ENCODE measurements at regions of chr10 and their contacts with region 1.

Region 1: GRCh38 chr10:100185364-100186252 is at the start of gene ERLIN1:
- DNase-seq: peak; percentile 96
- H3K4me3 Mint-ChIP-seq: peak within 1 kb of the TSS; percentile 90
- H3K27ac Mint-ChIP-seq: peak within 1 kb of the TSS; percentile 92
- H3K4me1 Mint-ChIP-seq: peaks cover 55% of the 10 kb centered on the region
- H3K27me3 Mint-ChIP-seq: no peaks in the 10 kb centered on the region
- total RNA-seq, gene ERLIN1: 15.4 to 16.8 TPM

Region 2: GRCh38 chr10:100167553-100168312 is 17.9 kb before region 1 on chr10:
- CTCF ChIA-PET with region 1: no interaction called
- POLR2A ChIA-PET with region 1: interaction called, 5 read pairs
- intact Hi-C with region 1: loop called (anchors 2 kb)
- DNase-seq: no peak
- H3K4me3 Mint-ChIP-seq: peak overlapping the region; percentile 44
- H3K27ac Mint-ChIP-seq: peak overlapping the region; percentile 56
- H3K4me1 Mint-ChIP-seq: peaks cover 42% of the 10 kb centered on the region
- H3K27me3 Mint-ChIP-seq: no peaks in the 10 kb centered on the region

Region 3: GRCh38 chr10:100174699-100175677 is 10.6 kb before region 1 on chr10:
- CTCF ChIA-PET with region 1: no interaction called
- POLR2A ChIA-PET with region 1: interaction called, 20 read pairs
- intact Hi-C with region 1: loop called (anchors 1 kb)
- DNase-seq: peak; percentile 34
- H3K4me3 Mint-ChIP-seq: peak overlapping the region; percentile 26
- H3K27ac Mint-ChIP-seq: peak overlapping the region; percentile 57
- H3K4me1 Mint-ChIP-seq: peaks cover 41% of the 10 kb centered on the region
- H3K27me3 Mint-ChIP-seq: no peaks in the 10 kb centered on the region

Region 4: GRCh38 chr10:100229819-100230422 is 44.3 kb after region 1 on chr10:
- CTCF ChIA-PET with region 1: no interaction called
- POLR2A ChIA-PET with region 1: no interaction called
- intact Hi-C with region 1: loop called (anchors 1 kb)
- DNase-seq: no peak
- H3K4me3 Mint-ChIP-seq: peak overlapping the region; percentile 88
- H3K27ac Mint-ChIP-seq: peak overlapping the region; percentile 81
- H3K4me1 Mint-ChIP-seq: peaks cover 25% of the 10 kb centered on the region
- H3K27me3 Mint-ChIP-seq: no peaks in the 10 kb centered on the region

Region 5: DNA sequence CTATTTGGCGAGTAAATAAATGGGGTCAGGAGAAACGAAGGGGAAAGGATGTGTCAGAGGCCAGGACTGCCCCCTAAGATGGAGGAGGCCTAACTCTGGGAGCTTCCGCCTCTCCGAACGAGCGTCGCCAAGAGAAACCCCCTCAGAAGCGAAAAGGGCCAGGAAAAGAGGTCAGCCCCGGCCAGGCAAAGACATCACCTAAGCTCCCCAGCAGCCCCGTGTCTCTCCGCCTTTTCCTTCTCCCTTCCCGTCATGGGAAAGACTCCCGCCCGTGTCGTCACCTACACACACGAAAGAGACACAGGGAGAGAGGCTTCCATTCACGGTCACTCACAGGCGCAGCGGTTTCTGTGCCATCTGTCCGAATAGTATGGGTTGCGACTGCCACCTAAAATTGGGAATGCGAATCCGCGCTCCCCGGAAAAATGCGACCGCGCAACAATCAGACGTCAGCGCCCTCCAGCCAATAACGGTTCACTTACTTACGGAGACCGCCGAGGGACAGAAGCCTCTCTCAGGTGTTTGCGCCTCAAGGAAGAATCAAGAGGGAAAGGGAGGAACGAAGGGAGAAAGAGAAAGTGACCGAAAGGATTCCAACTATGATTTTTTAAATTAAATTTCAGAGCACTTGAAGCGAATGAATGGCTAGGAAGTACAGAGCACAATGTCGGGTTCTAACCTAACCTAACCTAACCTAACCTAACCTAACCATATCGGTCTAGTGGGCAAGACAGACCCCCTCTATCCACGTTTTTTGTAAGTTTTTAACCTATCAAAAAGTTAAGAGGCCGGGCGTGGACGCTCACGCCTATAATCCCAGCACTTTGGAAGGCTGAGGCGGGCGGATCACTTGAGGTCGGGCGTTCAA is 81.9 kb after region 1 on chr10 and contains the start of gene CWF19L1:
- CTCF ChIA-PET with region 1: no interaction called
- POLR2A ChIA-PET with region 1: interaction called, 4 read pairs
- intact Hi-C with region 1: loop called (anchors 2 kb)
- DNase-seq: peak; percentile 88
- H3K4me3 Mint-ChIP-seq: peak within 1 kb of the TSS; percentile 100
- H3K27ac Mint-ChIP-seq: peak within 1 kb of the TSS; percentile 98
- H3K4me1 Mint-ChIP-seq: peaks cover 22% of the 10 kb centered on the region
- H3K27me3 Mint-ChIP-seq: no peaks in the 10 kb centered on the region
- total RNA-seq, gene CWF19L1: 40.6 to 42.5 TPM